ENCODE measurements at regions of chr21 and their contacts with region 1.

Region 1: DNA sequence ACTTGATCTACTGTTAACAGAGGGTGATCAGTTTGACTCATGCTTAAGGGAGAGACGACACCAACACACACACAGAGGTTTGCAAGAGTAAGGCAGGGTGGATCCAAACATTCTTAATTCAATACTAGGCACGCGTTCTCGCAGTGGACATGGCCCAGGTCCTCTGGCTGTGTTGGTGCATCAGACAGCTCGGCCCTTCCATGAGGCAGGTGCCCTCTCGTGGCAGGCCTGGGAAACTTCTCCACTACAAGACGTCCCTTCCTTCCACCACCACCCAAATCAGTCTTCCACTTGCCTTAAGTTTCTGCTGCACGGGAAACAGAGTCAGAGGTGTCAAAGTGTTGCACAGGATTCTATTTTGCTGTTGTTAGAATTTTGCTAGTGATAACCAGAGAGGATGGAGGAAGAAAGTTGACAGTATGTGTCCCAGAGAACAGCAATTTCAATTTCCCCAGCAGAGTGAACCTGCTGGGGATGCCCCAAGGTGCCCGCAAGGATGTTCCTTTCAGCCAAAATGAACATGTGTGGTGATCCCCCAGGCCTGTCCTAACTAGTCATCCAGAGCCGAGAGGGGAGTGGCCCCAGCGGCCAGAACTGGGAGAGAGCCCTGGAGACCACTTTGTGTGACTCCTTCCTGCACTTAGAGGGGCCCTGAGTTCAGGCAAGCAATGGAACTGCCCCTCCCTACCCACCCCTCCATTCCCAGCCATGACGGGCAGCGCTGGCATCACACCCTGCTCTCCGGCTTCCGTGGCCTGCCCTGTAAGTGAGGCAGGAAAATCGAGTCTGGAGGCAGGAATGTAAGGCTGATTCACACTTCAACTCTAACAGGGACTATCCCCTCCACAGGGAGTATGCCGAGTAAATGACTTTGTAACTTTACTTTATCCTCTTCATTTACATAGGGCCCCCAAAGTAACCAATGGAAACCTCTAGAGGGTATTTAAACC is 34.8 kb downstream of the MX1 start:
- DNase-seq: peak; percentile 9
- H3K4me3 Mint-ChIP-seq: no peak overlapping the region
- H3K27ac Mint-ChIP-seq: no peak overlapping the region
- H3K4me1 Mint-ChIP-seq: peaks cover 11% of the 10 kb centered on the region
- H3K27me3 Mint-ChIP-seq: no peaks in the 10 kb centered on the region

Region 2: DNA sequence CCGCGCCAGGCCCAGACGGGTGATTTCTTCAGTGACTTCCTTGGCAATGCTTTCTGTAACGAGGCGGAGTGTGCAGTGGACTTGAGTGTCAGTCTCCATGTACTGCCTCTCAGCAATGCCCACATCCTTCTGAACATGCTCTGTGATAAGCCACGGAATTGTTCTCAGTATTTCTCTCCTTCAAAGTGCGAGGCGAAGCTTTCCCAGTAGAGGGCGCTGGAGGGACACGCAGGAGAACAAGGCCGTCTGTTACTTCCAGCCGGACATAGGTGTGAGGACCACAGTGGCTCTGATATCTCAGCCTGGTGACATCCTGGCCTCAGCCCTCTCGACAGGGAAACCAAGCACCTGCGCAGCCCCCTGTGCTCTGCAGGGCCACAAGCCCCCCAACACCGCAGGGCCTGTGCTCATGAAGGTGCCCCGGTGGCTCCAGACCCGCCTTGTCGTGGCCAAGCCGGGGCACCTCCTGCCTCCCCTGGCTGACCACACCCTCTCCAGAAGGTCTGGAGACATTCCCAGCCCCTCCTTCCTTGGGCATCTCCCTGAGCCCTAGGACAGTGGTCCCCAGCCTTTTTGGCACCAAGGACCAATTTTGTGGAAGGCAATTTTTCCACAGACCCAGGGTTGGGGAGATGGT is 338.9 kb before region 1 on chr21:
- intact Hi-C with region 1: loop called (anchors 10 kb)
- DNase-seq: peak; percentile 37
- H3K4me3 Mint-ChIP-seq: no peak overlapping the region
- H3K27ac Mint-ChIP-seq: no peak overlapping the region
- H3K4me1 Mint-ChIP-seq: no peaks in the 10 kb centered on the region
- H3K27me3 Mint-ChIP-seq: peaks cover 2% of the 10 kb centered on the region

Region 3: GRCh38 chr21:41419911-41420862 is 40.7 kb before region 1 on chr21:
- intact Hi-C with region 1: no loop called
- DNase-seq: peak; percentile 35
- H3K4me3 Mint-ChIP-seq: peak overlapping the region; percentile 85
- H3K27ac Mint-ChIP-seq: peak overlapping the region; percentile 87
- H3K4me1 Mint-ChIP-seq: peaks cover 60% of the 10 kb centered on the region
- H3K27me3 Mint-ChIP-seq: peaks cover 6% of the 10 kb centered on the region

Measured in activated T-helper 1 cell treated with anti-CD3 and anti-CD28 coated beads, Interleukin-12 subunit alpha, Interleukin-12 subunit beta, Interleukin-2, Interleukin-4 antibody, amounts not matched to agents 30 ng/mL and 10 ng/mL and 1 ng/mL, durations not matched to agents 14 hours and 24 hours and 36 hours (primary cell).